ENCODE measurements at regions of chr10 and their contacts with region 1.

Region 1: GRCh38 chr10:30687698-30688219 is 58.2 kb upstream of the LYZL2 start:
- DNase-seq: peak; percentile 45
- H3K4me3 ChIP-seq: no peak overlapping the region
- H3K27ac ChIP-seq: no peak overlapping the region
- H3K27me3 ChIP-seq: peaks cover 3% of the 10 kb centered on the region
- CTCF ChIP-seq: peak; percentile 98

Region 2: DNA sequence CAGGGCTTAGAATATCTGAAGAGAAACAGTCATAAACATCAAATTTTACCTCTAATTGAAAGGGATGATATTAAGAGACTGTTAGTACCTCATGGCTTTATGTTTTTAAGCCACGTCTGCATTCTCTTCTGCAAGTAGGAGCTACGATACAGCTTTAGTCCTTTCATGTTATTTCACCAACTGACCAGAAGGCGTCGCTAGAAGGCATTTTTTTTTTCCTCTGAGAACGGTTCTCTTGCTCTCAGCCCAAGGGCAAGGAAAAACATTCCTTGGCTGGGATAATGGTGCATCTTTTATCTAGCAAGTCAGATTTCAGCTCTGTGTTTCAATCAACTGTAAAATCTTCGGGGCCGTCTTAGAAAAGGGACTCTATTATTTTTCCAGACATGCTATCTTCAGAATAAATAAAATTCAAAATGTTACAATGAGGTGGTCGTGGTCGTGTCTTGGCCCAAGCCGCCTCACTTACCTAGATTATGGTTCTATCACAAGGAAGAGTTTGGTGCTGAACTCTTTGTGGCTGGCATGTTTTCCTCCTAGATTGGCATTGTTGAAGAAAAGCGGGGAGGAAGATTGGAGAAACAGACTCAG is 16.6 kb before region 1 on chr10:
- CTCF ChIA-PET with region 1: interaction called, 10 read pairs
- POLR2A ChIA-PET with region 1: no interaction called
- DNase-seq: peak; percentile 75
- H3K4me3 ChIP-seq: peak overlapping the region; percentile 32; the same call in 1 of the 2 replicates
- H3K27ac ChIP-seq: no peak overlapping the region
- H3K27me3 ChIP-seq: no peaks in the 10 kb centered on the region
- CTCF ChIP-seq: peak; percentile 76

Measured in AG04450 (cell line).